ENCODE measurements at regions of chr2 and their contacts with region 1.

Region 1: DNA sequence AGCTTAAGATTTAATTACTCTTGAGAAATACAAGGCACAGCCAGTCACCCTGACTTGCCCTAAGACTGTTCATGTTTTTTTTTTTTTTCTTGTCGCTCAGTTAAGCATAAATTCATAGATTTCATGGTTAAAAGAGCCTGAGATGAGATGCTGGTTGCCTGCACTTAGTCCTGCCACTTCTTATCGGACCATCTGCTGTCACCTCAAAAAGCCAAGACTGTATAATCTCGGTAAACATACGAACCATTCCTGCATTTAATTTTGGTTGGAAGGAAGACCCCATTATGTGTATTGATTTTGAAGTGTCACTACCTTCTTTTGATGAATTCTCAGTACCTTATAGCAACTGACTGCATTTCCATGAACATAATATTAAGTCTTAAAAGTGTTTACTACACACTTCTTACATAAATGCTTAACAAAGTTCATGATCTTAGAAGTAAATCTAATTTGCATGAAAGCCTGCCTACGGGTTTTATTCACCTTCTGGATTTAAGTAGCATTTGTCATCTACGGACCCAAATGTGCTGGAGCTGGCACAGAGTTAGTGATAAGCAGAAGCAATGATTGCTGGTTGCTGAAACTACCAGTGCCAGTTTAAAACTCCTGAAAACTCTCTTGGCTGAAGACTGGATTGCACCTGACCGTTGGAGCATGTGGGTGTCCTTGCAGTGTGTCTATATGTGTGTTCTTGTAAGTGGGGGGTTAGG is 843.4 kb downstream of the TMEM182 start:
- DNase-seq: no peak
- H3K4me3 ChIP-seq: no peak overlapping the region
- H3K27ac ChIP-seq: no peak overlapping the region
- H3K4me1 ChIP-seq: no peaks in the 10 kb centered on the region
- H3K27me3 ChIP-seq: no peaks in the 10 kb centered on the region
- CTCF ChIP-seq: no peak

Region 2: DNA sequence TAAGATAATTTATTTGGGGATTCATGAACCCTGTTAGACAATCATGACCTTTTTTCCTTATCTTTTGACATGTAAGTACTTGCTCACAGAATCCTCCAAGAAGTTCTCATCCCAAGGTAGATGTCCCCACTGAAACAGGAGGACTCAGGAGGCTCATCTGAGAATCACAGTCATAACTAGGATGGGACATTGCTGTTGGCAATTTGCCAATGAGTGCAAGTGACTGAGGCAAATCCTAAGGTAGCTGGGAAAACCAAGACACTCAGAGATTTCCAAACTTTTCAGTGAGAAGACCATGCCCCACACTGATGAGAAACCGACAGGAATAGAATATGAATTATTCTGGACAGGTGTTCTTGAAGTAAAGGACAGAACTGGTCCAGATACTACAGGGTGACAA is 108.4 kb before region 1 on chr2:
- CTCF ChIA-PET with region 1: no interaction called
- POLR2A ChIA-PET with region 1: no interaction called
- intact Hi-C with region 1: no loop called
- DNase-seq: no peak
- H3K4me3 ChIP-seq: no peak overlapping the region
- H3K27ac ChIP-seq: no peak overlapping the region
- H3K4me1 ChIP-seq: no peaks in the 10 kb centered on the region
- H3K27me3 ChIP-seq: no peaks in the 10 kb centered on the region
- CTCF ChIP-seq: no peak

Region 3: DNA sequence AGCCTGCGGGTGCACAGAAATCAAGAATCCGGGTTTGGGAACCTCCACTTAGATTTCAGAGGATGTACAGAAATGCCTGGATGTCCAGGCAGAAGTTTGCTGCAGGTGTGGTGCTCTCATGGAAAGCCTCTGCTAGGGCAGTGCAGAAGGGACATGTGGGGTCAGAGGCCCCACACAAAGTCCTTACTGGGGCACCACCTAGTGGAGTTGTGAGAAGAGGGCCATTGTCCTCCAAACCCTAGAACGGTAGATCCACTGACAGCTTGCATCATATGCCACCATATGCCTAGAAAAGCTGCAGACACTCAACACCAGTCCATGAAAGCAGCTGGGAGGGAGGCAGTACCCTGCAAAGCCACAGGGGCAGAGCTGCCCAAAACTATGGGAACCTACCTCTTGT is 10.4 kb before region 1 on chr2:
- CTCF ChIA-PET with region 1: no interaction called
- POLR2A ChIA-PET with region 1: no interaction called
- intact Hi-C with region 1: loop called (anchors 1 kb)
- DNase-seq: no peak
- H3K4me3 ChIP-seq: no peak overlapping the region
- H3K27ac ChIP-seq: no peak overlapping the region
- H3K4me1 ChIP-seq: no peaks in the 10 kb centered on the region
- H3K27me3 ChIP-seq: no peaks in the 10 kb centered on the region
- CTCF ChIP-seq: no peak